H1 (cell line): ENCODE measurements at regions of chr3 and their contacts with region 1.

Region 1: GRCh38 chr3:161096771-161097355 is 8.3 kb downstream of the B3GALNT1 start:
- DNase-seq: peak; percentile 10 to 64
- H3K4me3 ChIP-seq: no peak overlapping the region
- H3K27ac ChIP-seq: no peak overlapping the region
- H3K4me1 ChIP-seq: no peaks in the 10 kb centered on the region
- H3K27me3 ChIP-seq: no peaks in the 10 kb centered on the region
- CTCF ChIP-seq: peak; percentile 35 to 77 (median 66)
- EP300 ChIP-seq: no peak
- POLR2A ChIP-seq: no peak
- RAD21 ChIP-seq: peak; percentile 64 to 75

Region 2: DNA sequence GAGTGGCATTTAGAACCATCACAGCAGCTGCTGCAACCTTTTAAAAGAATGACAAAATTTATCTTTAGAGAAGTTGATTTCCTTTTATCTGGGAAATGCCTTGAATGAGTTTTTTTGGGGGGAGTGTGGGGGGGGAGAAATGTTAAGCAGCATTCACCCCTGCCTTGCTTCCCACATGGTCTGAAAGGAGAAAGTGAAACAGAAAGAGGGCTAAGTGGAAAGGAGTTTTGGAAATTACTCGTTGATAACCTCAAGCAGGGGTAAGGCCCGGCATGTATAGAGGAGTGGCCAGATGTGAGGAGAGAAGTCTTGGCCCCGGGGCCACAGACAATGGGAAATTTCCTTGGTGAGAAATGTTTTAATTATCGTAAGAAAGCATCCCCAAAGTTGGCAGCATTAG is 15.2 kb before region 1 on chr3:
- CTCF ChIA-PET with region 1: interaction called, 14 read pairs
- POLR2A ChIA-PET with region 1: no interaction called
- DNase-seq: no peak
- H3K4me3 ChIP-seq: no peak overlapping the region
- H3K27ac ChIP-seq: no peak overlapping the region
- H3K4me1 ChIP-seq: no peaks in the 10 kb centered on the region
- H3K27me3 ChIP-seq: no peaks in the 10 kb centered on the region
- CTCF ChIP-seq: no peak
- EP300 ChIP-seq: no peak
- POLR2A ChIP-seq: no peak
- RAD21 ChIP-seq: no peak

Region 3: DNA sequence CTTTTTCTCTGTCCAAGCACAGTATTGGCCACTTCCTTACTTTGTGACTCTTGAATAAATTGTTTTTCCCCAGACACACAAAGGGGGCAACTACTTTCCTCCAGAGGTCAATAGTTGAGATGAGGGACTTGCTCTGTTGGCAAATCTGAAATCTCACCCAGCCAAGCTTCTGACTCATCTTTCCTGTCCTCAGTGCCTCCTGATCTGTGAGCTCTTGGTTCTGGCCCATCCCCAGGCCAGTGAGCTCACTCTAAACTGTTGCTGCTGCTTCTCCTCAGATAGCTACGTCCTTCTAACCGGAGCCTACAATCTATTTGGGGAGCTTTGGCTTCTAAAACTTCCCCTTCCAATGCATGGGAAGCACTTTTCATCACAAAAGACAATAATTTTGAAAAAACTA is 74.2 kb after region 1 on chr3:
- CTCF ChIA-PET with region 1: interaction called, 12 read pairs
- POLR2A ChIA-PET with region 1: no interaction called
- DNase-seq: no peak
- H3K4me3 ChIP-seq: no peak overlapping the region
- H3K27ac ChIP-seq: no peak overlapping the region
- H3K4me1 ChIP-seq: no peaks in the 10 kb centered on the region
- H3K27me3 ChIP-seq: no peaks in the 10 kb centered on the region
- CTCF ChIP-seq: no peak
- EP300 ChIP-seq: no peak
- POLR2A ChIP-seq: no peak
- RAD21 ChIP-seq: no peak